GM23248 (cell line): ENCODE measurements at regions of chr4 and their contacts with region 1.

Region 1: DNA sequence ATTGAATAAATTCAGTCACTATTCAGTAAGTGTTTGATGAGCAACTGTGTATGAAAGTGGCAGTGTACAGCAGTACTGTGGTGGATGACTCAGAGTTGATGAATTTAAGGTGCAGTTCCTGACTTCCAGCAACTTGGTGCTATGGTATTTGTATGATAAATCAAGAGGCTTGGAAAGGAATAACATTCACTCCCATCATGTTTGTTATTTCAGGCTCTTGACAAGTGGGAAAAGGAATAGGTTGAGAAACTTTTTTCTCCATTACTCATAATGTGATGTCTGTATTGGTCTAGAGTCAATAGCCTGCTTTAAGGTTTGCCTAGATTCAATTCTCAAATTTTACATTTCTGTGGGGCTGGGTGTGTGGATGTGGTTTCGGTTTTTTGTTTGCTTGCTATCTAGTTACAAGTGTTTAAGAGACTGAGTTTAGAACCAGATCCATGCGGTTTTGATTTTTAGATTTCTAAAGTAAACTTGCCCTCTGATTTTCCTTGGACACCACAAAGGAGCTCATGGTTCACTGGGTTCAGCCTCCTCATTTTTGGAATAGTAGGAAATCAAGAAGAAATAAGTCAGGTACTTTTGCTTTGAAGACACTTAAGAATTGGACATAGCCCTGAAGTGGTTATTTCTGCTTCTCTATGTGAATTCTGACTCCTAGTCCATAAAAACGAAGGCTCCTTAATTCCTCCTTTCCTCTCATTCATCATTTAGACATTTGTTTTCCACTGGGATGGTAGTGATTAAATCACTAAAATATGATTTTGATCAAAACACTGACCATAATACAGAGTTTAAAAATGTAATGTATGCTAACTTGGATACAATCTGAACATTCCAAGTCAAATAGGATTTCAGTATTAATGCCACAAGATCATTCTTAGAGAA is 34.9 kb upstream of the CYP2U1 start:
- DNase-seq: peak; percentile 91
- H3K4me3 ChIP-seq: peak overlapping the region; percentile 44
- H3K27ac ChIP-seq: peak overlapping the region; percentile 51
- H3K4me1 ChIP-seq: peaks cover 34% of the 10 kb centered on the region
- H3K27me3 ChIP-seq: no peaks in the 10 kb centered on the region

Region 2: DNA sequence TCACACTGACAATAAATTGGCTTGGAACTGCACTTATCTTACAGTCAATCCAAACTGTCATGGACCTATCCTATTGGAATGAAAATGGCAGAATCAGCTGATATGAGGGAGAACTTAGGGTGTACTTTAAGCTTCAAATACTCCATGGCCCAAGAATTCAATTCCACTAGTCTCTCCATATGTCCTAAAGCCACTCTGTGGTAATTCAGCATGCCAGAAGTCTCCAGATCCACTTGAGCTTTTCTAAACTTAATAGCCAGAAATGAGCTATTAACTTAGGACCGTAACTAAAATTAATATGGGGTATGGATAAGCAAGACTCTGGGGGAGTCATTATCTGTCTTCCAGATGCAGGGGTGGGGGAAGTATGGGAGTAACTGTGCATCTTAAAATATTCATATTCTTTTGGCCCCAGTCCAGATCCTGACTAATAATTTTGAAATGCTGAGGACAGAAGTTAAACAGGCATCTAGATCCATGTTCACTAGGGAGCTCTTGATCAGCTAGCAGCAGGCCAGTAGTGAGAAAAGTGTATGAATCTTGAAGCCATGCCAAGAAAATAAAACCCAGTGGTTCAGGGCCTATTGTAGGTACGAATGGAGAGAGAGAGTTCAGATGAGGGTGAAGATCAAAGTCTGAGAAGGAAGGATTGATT is 1027.9 kb before region 1 on chr4:
- in situ Hi-C with region 1: no loop called
- DNase-seq: peak; percentile 46
- H3K4me3 ChIP-seq: no peak overlapping the region
- H3K27ac ChIP-seq: no peak overlapping the region
- H3K4me1 ChIP-seq: peaks cover 30% of the 10 kb centered on the region
- H3K27me3 ChIP-seq: no peaks in the 10 kb centered on the region

Region 3: GRCh38 chr4:107757864-107758476 is 138.4 kb before region 1 on chr4:
- in situ Hi-C with region 1: loop called (anchors 5 kb)
- DNase-seq: peak; percentile 65
- H3K4me3 ChIP-seq: no peak overlapping the region
- H3K27ac ChIP-seq: no peak overlapping the region
- H3K4me1 ChIP-seq: no peaks in the 10 kb centered on the region
- H3K27me3 ChIP-seq: peaks cover 15% of the 10 kb centered on the region